ENCODE measurements at regions of chrX and their contacts with region 1.

Region 1: GRCh38 chrX:40102393-40103381 is 4.9 kb upstream of the BCOR start:
- DNase-seq: no peak
- ATAC-seq: no peak
- H3K4me3 ChIP-seq: no peak overlapping the region
- H3K27ac ChIP-seq: no peak overlapping the region
- H3K4me1 ChIP-seq: peaks cover 15% of the 10 kb centered on the region; the same call in 1 of the 2 replicates
- H3K27me3 ChIP-seq: no peaks in the 10 kb centered on the region; a peak in 1 of 4 replicates
- CTCF ChIP-seq: no peak
- EP300 ChIP-seq: no peak
- POLR2A ChIP-seq: no peak
- RAD21 ChIP-seq: no peak

Region 2: GRCh38 chrX:40031911-40032310 is 70.8 kb before region 1 on chrX:
- CTCF ChIA-PET with region 1: no interaction called
- POLR2A ChIA-PET with region 1: interaction called, 10 read pairs
- RAD21 ChIA-PET with region 1: no interaction called
- SMC1A ChIA-PET with region 1: no interaction called
- in situ Hi-C with region 1: no loop called
- intact Hi-C with region 1: no loop called
- DNase-seq: no peak
- ATAC-seq: no peak
- H3K4me3 ChIP-seq: no peak overlapping the region
- H3K27ac ChIP-seq: no peak overlapping the region
- H3K4me1 ChIP-seq: no peaks in the 10 kb centered on the region
- H3K27me3 ChIP-seq: no peaks in the 10 kb centered on the region
- CTCF ChIP-seq: no peak
- EP300 ChIP-seq: no peak
- POLR2A ChIP-seq: no peak
- RAD21 ChIP-seq: no peak

Region 3: DNA sequence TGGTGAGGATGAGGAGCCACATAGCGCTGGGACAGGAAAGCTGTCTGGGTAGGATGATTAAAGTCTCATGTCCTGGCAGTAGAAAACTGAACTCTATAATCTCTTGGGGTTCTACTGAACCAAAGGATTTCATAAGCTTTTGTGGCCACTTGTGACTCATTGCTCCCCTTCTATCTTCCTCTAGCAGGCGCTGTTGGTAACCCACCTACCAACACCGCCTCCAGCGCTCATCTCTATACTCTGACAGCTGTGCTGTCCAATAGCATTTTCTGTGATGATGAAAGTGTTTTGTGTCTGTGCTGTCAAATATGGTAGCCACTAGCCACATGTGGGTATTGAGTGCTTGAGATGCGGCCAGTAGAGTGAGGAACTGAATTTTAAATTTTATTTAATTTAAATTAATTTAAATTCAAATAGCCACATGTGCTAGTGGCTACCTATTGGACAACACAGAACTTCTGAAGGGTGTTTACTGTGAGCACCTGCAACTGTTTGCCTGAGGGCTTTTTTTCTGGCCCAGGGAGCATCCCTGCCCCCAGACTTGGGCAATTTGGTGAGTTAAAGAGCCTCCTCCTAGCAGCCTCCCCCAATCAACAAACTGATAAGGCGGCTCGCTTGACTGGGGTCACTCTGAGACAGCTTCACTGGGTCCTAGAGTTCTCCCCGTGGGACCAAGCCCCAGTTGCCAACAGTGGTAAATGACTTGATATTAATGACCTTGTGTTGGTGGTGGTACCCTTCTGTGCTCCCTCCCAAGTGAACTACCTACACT is 308.8 kb after region 1 on chrX:
- CTCF ChIA-PET with region 1: no interaction called
- POLR2A ChIA-PET with region 1: no interaction called
- RAD21 ChIA-PET with region 1: no interaction called
- SMC1A ChIA-PET with region 1: no interaction called
- in situ Hi-C with region 1: no loop called
- intact Hi-C with region 1: no loop called
- DNase-seq: no peak
- ATAC-seq: peak; percentile 55
- H3K4me3 ChIP-seq: no peak overlapping the region
- H3K27ac ChIP-seq: no peak overlapping the region
- H3K4me1 ChIP-seq: no peaks in the 10 kb centered on the region
- H3K27me3 ChIP-seq: no peaks in the 10 kb centered on the region
- CTCF ChIP-seq: peak in 2 of 3 experiments; percentile 2 to 29; a peak in 1 of 6 replicates
- EP300 ChIP-seq: no peak
- POLR2A ChIP-seq: no peak
- RAD21 ChIP-seq: no peak

Measured in GM12878 (cell line).